Activated B cell treated with CpG ODN at 0.5 μM for 24 hours (primary cell): ENCODE measurements at regions of chr6 and their contacts with region 1.

Region 1: DNA sequence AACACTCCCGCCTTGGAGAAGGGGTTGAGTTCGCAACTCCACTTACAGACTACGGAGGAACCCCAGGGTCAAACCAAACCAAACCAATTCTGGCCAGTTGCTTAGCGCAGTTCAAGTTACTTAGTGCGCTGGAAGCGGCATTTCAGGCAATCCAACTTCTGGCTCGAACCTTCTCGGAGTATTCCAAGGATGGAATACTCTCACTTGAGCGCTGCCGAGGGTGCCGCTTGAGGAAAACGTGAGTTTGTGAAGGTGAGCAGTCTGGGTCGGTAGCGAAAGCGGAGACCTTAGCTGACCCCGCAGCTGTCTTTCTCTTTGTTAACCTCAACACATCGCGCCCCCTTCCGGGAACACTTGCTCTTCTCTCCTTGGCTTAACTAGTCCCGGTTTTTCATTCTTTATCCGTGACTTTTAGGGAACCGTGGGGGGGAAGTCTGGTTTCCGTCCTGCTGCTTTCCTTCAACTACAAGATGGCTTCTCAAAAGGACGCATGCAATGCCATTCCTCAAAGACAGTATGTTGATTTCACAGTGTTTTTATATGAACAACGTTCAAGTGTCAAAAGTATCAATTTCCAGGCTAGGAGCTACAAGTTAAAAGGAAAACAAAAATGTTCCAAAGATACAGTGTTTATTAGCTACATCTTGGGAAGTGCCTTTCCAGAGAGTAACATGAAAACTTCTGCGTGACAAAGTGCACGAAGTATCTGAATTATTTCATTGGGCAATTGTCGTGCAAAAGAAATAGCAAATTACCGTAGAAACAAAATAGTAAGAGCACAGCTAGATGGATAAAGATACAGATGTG is 742 bp upstream of the PNISR start:
- DNase-seq: peak; percentile 56
- ATAC-seq: peak; percentile 54
- H3K4me3 Mint-ChIP-seq: peak overlapping the region; percentile 99
- H3K27ac Mint-ChIP-seq: peak overlapping the region; percentile 100
- H3K4me1 Mint-ChIP-seq: peaks cover 52% of the 10 kb centered on the region
- H3K27me3 Mint-ChIP-seq: no peaks in the 10 kb centered on the region
- CTCF ChIP-seq: no peak

Region 2: DNA sequence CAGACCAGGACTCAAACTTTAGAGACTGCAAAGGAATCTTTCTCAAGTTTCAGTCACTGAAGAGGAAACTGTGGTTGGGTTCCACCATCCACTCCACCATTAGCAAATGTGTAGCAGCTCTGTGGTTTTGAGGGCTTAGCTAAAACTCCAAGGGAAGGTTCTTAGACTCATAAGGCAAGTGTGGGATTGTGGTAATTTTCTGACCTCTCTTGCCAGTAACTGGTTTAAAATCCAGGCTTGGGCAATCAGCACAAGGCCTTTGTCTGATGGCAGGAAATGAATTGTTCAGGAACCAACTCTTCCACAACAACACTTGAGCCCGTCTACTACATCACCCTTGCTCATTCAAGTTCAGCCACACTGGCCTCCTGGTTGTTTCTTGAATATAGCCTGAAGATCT is 409.5 kb before region 1 on chr6:
- CTCF ChIA-PET with region 1: no interaction called
- POLR2A ChIA-PET with region 1: no interaction called
- intact Hi-C with region 1: no loop called
- DNase-seq: no peak
- ATAC-seq: no peak
- H3K4me3 Mint-ChIP-seq: no peak overlapping the region
- H3K27ac Mint-ChIP-seq: no peak overlapping the region
- H3K4me1 Mint-ChIP-seq: no peaks in the 10 kb centered on the region
- H3K27me3 Mint-ChIP-seq: peaks cover 5% of the 10 kb centered on the region
- CTCF ChIP-seq: no peak

Region 3: GRCh38 chr6:99330159-99330558 is 95.7 kb before region 1 on chr6:
- CTCF ChIA-PET with region 1: interaction called, 10 read pairs
- POLR2A ChIA-PET with region 1: interaction called, 6 read pairs
- intact Hi-C with region 1: loop called (anchors 1 kb)
- DNase-seq: no peak
- ATAC-seq: peak; percentile 82
- H3K4me3 Mint-ChIP-seq: no peak overlapping the region
- H3K27ac Mint-ChIP-seq: no peak overlapping the region
- H3K4me1 Mint-ChIP-seq: peaks cover 14% of the 10 kb centered on the region
- H3K27me3 Mint-ChIP-seq: no peaks in the 10 kb centered on the region
- CTCF ChIP-seq: peak; percentile 71

Region 4: DNA sequence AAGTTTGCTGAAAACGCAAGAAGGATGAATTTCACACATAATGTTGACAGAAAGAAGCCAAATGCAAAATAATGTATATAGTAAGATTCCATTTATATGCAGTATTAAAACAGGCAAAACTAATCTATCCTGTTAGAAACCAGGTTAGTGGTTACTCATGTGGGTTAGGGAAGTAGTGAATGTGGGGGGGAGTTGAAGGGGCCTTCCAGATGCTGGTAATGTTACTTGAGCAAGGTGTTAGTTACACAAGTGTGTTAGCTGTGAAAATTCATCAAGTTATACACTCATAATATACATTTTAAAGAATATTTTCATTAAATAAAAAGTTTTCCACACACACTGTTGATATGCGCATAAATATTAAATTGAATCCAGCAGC is 59.5 kb after region 1 on chr6:
- CTCF ChIA-PET with region 1: interaction called, 3 read pairs
- POLR2A ChIA-PET with region 1: interaction called, 33 read pairs
- intact Hi-C with region 1: loop called (anchors 1 kb)
- DNase-seq: no peak
- ATAC-seq: peak; percentile 26
- H3K4me3 Mint-ChIP-seq: peak overlapping the region; percentile 35
- H3K27ac Mint-ChIP-seq: peak overlapping the region; percentile 89
- H3K4me1 Mint-ChIP-seq: peaks cover 26% of the 10 kb centered on the region
- H3K27me3 Mint-ChIP-seq: no peaks in the 10 kb centered on the region
- CTCF ChIP-seq: no peak

Region 5: GRCh38 chr6:99520855-99521632 is 95.2 kb after region 1 on chr6:
- CTCF ChIA-PET with region 1: no interaction called
- POLR2A ChIA-PET with region 1: interaction called, 10 read pairs
- intact Hi-C with region 1: loop called (anchors 1 kb)
- DNase-seq: peak; percentile 71
- ATAC-seq: peak; percentile 86
- H3K4me3 Mint-ChIP-seq: peak overlapping the region; percentile 99
- H3K27ac Mint-ChIP-seq: peak overlapping the region; percentile 97
- H3K4me1 Mint-ChIP-seq: peaks cover 41% of the 10 kb centered on the region
- H3K27me3 Mint-ChIP-seq: no peaks in the 10 kb centered on the region
- CTCF ChIP-seq: peak; percentile 33

Region 6: DNA sequence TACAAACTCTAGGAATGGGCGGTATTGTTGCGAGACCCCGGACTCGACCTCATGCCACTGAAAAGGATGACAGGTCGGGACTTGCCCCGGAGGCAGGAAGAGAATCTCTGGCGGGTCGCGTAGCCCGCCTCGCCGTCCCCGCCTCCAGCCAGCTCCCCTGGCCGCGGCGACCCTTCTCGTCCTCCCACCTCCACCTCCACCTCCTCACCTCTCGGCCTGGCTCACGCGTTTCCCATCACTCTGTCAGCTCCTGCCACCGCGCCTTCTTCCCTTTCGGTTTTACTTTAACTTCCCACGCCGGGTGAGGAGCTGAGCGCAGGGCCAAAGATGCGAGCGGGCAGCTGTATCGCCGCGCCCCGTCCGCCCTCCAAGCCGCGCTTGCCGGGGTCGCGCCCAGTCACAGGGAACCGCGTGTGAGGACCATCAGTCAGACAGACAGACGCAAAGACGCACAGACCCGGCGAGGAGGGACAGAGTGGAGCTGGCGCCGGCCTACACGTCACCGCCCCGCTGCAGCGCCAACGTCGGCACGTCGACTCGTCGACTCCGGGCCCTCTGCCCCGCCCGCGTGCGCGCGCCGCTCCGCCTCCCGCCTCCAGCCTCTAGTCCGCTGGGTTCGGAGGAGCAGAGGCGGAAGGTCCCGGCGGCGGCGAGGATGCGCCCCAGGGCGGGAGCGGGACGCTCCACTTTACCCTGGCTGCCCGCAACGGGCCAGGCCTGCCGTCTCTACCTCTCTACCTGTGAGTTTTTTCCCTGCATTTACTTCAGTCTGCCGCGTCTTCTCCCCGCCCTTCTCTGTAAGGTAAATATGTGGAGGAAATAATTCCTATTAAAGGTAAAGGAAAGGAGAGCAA is 1455.2 kb after region 1 on chr6 and contains the start of gene ASCC3:
- CTCF ChIA-PET with region 1: no interaction called
- POLR2A ChIA-PET with region 1: interaction called, 6 read pairs
- intact Hi-C with region 1: loop called (anchors 2 kb)
- DNase-seq: peak; percentile 87
- ATAC-seq: peak; percentile 96
- H3K4me3 Mint-ChIP-seq: peak within 1 kb of the TSS; percentile 100
- H3K27ac Mint-ChIP-seq: peak within 1 kb of the TSS; percentile 97
- H3K4me1 Mint-ChIP-seq: peaks cover 34% of the 10 kb centered on the region
- H3K27me3 Mint-ChIP-seq: no peaks in the 10 kb centered on the region
- CTCF ChIP-seq: no peak
- total RNA-seq, gene ASCC3: 44.1 and 47.8 TPM in 2 replicates